CD4-positive, alpha-beta memory T cell (primary cell): ENCODE measurements at regions of chr16 and their contacts with region 1.

Region 1: GRCh38 chr16:4307215-4308037 is 8.4 kb upstream of the GLIS2 start:
- DNase-seq: peak; percentile 97 to 99 (median 98)
- H3K4me3 ChIP-seq: peak overlapping the region; percentile 47 to 85
- H3K4me3 Mint-ChIP-seq: peak overlapping the region; percentile 87 to 97 (median 92)
- H3K27ac ChIP-seq: peak overlapping the region; percentile 76
- H3K27ac Mint-ChIP-seq: peak overlapping the region; percentile 96 to 100 (median 99)
- H3K4me1 ChIP-seq: peaks cover 18% of the 10 kb centered on the region
- H3K4me1 Mint-ChIP-seq: peaks cover 17 to 33% (median 20%) of the 10 kb centered on the region in 4 donors
- H3K27me3 ChIP-seq: no peaks in the 10 kb centered on the region
- H3K27me3 Mint-ChIP-seq: no peaks in the 10 kb centered on the region

Region 2: GRCh38 chr16:3954413-3954921 is 353.0 kb before region 1 on chr16:
- CTCF ChIA-PET with region 1: no interaction called
- POLR2A ChIA-PET with region 1: no interaction called
- intact Hi-C with region 1: no loop called
- DNase-seq: no peak
- H3K4me3 ChIP-seq: no peak overlapping the region
- H3K4me3 Mint-ChIP-seq: no peak overlapping the region
- H3K27ac ChIP-seq: no peak overlapping the region
- H3K27ac Mint-ChIP-seq: no peak overlapping the region
- H3K4me1 ChIP-seq: no peaks in the 10 kb centered on the region
- H3K4me1 Mint-ChIP-seq: peaks cover 0 to 3% (median 0%) of the 10 kb centered on the region in 4 donors
- H3K27me3 ChIP-seq: no peaks in the 10 kb centered on the region
- H3K27me3 Mint-ChIP-seq: peaks cover 22 to 26% of the 10 kb centered on the region in 2 donors

Region 3: DNA sequence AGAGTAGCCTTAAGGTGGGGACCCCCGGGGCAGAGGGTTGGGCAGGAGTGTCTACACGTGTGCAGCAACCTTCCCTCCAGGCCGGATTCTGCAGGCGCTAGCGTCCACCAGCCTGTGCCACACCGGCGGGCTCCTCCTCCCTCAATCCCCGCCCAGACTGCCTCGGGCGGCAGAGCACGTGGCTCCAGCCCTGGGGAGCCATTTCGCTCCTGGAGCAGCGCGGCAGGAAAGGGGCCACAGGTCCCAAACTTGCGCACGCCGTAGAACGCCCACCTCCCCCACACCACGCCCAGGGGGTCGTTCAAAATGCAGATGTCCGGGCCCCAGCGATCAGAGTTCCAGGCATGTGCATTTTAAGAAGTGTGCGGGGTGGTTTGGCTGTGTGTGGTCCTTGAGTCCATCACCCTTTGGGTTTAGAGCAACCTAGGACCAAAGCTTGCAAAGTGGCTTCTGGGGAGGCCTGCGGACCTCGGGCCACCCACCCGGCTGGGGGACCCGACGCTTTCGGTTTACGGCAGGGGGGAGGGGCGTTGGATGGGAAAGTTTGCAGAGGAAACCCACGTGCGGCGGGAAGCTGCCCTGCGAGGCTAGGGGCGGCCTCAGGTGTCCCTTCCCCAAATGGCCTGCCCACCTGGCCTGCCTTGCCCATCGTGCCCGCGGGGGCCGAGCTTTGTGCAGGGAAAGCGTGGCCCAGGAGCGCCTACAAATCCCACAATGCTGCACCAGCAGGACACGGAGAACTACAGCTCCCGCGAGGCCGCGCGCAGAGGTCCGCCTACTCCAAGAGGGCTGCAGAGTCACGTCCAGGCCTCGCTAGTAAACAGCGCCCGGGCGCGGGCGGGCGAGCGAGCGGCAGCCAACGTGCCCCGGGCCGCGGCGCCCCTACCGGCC is 36.0 kb before region 1 on chr16:
- CTCF ChIA-PET with region 1: interaction called, 5 read pairs
- POLR2A ChIA-PET with region 1: interaction called, 56 read pairs
- intact Hi-C with region 1: loop called (anchors 1 kb)
- DNase-seq: peak; percentile 84 to 94 (median 85)
- H3K4me3 ChIP-seq: peak overlapping the region; percentile 48 to 91
- H3K4me3 Mint-ChIP-seq: peak overlapping the region; percentile 86 to 93 (median 91)
- H3K27ac ChIP-seq: peak overlapping the region; percentile 71
- H3K27ac Mint-ChIP-seq: peak overlapping the region; percentile 72 to 98 (median 91)
- H3K4me1 ChIP-seq: peaks cover 10% of the 10 kb centered on the region
- H3K4me1 Mint-ChIP-seq: peaks cover 6 to 27% (median 14%) of the 10 kb centered on the region in 4 donors
- H3K27me3 ChIP-seq: no peaks in the 10 kb centered on the region
- H3K27me3 Mint-ChIP-seq: no peaks in the 10 kb centered on the region

Region 4: DNA sequence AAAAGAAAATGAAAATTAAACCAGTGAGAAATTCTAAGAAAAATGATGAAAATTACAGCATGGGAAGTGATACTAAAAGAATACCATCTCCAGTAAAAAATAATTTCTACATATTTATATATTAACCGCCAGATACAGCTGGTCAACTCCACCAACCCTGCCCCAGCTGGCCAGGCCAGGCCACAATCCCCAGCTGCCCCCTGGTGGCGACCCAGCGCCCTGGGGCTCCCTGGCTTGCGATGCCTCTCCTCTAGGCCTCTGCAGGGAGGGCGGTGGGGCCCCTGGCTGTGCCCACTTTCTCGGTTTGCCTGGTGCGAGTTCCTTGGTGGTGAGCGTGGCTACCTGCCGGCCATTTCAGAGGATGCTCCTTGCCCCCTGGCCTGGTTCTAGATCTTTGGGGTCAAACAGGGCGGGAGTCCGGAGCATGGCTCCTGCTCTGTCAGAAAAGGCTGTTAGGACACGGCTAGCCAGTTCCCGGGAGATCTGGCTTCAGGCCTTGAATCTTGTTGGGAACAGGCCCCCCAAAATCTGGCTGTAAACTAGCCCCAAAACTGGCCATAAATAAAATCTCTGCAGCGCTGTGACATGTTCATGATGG is 22.9 kb after region 1 on chr16:
- CTCF ChIA-PET with region 1: interaction called, 53 read pairs
- POLR2A ChIA-PET with region 1: interaction called, 5 read pairs
- intact Hi-C with region 1: loop called (anchors 1 kb)
- DNase-seq: peak; percentile 59 to 71 (median 61)
- H3K4me3 ChIP-seq: no peak overlapping the region
- H3K4me3 Mint-ChIP-seq: no peak overlapping the region
- H3K27ac ChIP-seq: no peak overlapping the region
- H3K27ac Mint-ChIP-seq: peak overlapping the region in 1 of 7 donors; percentile 50
- H3K4me1 ChIP-seq: peaks cover 9% of the 10 kb centered on the region
- H3K4me1 Mint-ChIP-seq: peaks cover 0 to 5% (median 1%) of the 10 kb centered on the region in 4 donors
- H3K27me3 ChIP-seq: no peaks in the 10 kb centered on the region
- H3K27me3 Mint-ChIP-seq: no peaks in the 10 kb centered on the region

Region 5: GRCh38 chr16:4373863-4374742 is 66.7 kb after region 1 on chr16:
- CTCF ChIA-PET with region 1: no interaction called
- POLR2A ChIA-PET with region 1: no interaction called
- intact Hi-C with region 1: no loop called
- DNase-seq: no peak
- H3K4me3 ChIP-seq: no peak overlapping the region
- H3K4me3 Mint-ChIP-seq: peak overlapping the region in 2 of 8 donors; percentile 17 to 57
- H3K27ac ChIP-seq: no peak overlapping the region
- H3K27ac Mint-ChIP-seq: peak overlapping the region in 6 of 7 donors; percentile 32 to 89 (median 72)
- H3K4me1 ChIP-seq: peaks cover 43% of the 10 kb centered on the region
- H3K4me1 Mint-ChIP-seq: peaks cover 12 to 52% (median 33%) of the 10 kb centered on the region in 4 donors
- H3K27me3 ChIP-seq: no peaks in the 10 kb centered on the region
- H3K27me3 Mint-ChIP-seq: no peaks in the 10 kb centered on the region

Region 6: GRCh38 chr16:4957720-4958509 is 650.5 kb after region 1 on chr16 and contains the start of gene SEC14L5:
- CTCF ChIA-PET with region 1: no interaction called
- POLR2A ChIA-PET with region 1: no interaction called
- intact Hi-C with region 1: loop called (anchors 5 kb)
- DNase-seq: peak; percentile 86 to 96 (median 89)
- H3K4me3 ChIP-seq: peak within 1 kb of the TSS; percentile 23 to 45
- H3K4me3 Mint-ChIP-seq: peak within 1 kb of the TSS; percentile 78 to 92 (median 86)
- H3K27ac ChIP-seq: no peak within 1 kb of the TSS
- H3K27ac Mint-ChIP-seq: peak within 1 kb of the TSS; percentile 1 to 77 (median 57)
- H3K4me1 ChIP-seq: peaks cover 16% of the 10 kb centered on the region
- H3K4me1 Mint-ChIP-seq: peaks cover 12 to 28% (median 20%) of the 10 kb centered on the region in 4 donors
- H3K27me3 ChIP-seq: peaks cover 11% of the 10 kb centered on the region
- H3K27me3 Mint-ChIP-seq: peaks cover 21 to 30% of the 10 kb centered on the region in 2 donors
- total RNA-seq, gene SEC14L5: not detected